ENCODE measurements at regions of chr14 and their contacts with region 1.

Region 1: GRCh38 chr14:38197001-38197783 is 10.5 kb upstream of the SSTR1 start:
- DNase-seq: no peak
- H3K4me3 ChIP-seq: no peak overlapping the region
- CTCF ChIP-seq: no peak

Region 2: DNA sequence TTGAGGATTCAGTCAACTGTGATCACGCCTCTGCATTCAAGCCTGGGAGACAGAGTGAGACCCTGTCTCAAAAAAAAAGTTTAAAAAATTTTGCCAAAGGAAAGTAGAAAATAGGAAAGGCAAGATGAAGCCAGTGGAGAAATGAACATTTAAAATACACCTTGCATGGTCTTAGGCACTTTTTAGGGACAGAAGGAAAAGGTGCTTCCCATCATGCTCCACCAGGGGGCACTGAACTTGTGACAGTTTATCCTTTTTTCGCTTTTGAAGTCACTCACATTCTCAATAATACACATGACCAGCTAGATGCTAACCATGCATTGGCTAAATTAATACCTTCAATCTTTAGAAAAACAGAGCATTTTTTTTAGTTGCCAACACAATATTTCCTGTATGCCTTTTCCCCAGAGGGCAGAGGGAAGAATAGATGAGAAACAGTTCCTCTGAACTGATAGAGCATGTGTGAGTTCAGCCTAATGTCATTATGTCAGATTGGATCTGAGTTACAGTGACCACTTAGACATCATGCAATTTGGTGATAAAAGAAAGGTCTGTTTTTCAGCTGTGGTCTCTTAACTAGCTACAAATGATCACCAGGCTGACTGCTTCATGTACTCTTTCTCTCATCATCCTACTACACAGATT is 211.2 kb before region 1 on chr14:
- CTCF ChIA-PET with region 1: interaction called, 22 read pairs
- POLR2A ChIA-PET with region 1: no interaction called
- DNase-seq: no peak
- H3K4me3 ChIP-seq: no peak overlapping the region
- CTCF ChIP-seq: peak; percentile 72

Region 3: GRCh38 chr14:38208618-38209562 is 11.7 kb after region 1 on chr14:
- CTCF ChIA-PET with region 1: interaction called, 35 read pairs
- POLR2A ChIA-PET with region 1: interaction called, 5 read pairs
- DNase-seq: no peak
- H3K4me3 ChIP-seq: peak overlapping the region; percentile 81
- CTCF ChIP-seq: peak; percentile 82

Measured in AG04449 (cell line).